Upper lobe of right lung (tissue), 1 donor: ENCODE measurements at regions of chr22 and their contacts with region 1.

Region 1: GRCh38 chr22:37686002-37686982 is at the start of gene NOL12:
- DNase-seq: peak; percentile 89
- ATAC-seq: peak; percentile 94
- H3K4me3 ChIP-seq: peak within 1 kb of the TSS; percentile 86
- H3K27ac ChIP-seq: peak within 1 kb of the TSS; percentile 93
- H3K4me1 ChIP-seq: peaks cover 14% of the 10 kb centered on the region
- H3K27me3 ChIP-seq: no peaks in the 10 kb centered on the region
- CTCF ChIP-seq: no peak
- total RNA-seq, gene NOL12: 21.6 TPM

Region 2: GRCh38 chr22:37633625-37634416 is 52.5 kb before region 1 on chr22:
- intact Hi-C with region 1: loop called (anchors 10 kb)
- DNase-seq: peak; percentile 90
- ATAC-seq: peak; percentile 83
- H3K4me3 ChIP-seq: peak overlapping the region; percentile 8
- H3K27ac ChIP-seq: peak overlapping the region; percentile 89
- H3K4me1 ChIP-seq: peaks cover 52% of the 10 kb centered on the region
- H3K27me3 ChIP-seq: no peaks in the 10 kb centered on the region
- CTCF ChIP-seq: peak; percentile 36

Region 3: DNA sequence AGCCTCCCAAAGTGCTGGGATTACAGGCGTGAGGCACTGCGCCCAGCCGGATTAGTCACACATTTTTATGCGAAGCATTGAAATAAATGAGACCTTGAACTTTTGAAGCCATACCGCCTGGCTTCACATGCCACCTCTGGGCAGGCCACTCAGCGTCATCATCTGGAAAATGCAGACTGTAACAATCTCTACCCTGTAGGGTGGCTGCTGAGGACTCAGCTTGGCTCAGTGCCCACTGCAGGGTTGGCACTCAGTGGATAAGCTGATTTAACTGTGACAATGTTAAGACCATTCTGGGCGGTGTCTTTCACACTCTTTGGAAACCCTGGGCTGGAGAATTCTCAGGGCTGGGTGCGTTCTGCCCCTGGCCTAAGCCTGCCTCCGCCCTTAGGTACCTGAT is 38.4 kb before region 1 on chr22:
- intact Hi-C with region 1: no loop called
- DNase-seq: no peak
- ATAC-seq: no peak
- H3K4me3 ChIP-seq: no peak overlapping the region
- H3K27ac ChIP-seq: no peak overlapping the region
- H3K4me1 ChIP-seq: no peaks in the 10 kb centered on the region
- H3K27me3 ChIP-seq: no peaks in the 10 kb centered on the region
- CTCF ChIP-seq: no peak

Region 4: DNA sequence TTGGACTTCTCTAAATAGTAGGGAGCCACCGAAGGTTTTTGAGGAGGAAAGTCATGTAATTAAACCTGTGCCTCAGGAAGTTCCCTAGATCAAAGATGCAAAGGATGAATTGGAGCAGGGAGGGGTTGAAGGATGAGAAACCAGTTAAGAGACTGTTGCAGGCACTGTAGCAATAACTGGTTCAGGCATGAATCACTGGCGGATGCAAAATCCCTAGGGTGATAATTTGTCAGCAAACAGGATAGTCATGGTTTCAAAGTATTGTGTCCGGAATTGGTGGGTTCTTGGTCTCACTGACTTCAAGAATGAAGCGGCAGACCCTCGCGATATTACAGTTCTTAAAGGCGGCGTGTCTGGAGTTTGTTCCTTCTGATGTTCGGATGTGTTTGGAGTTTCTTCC is 30.4 kb after region 1 on chr22:
- intact Hi-C with region 1: no loop called
- DNase-seq: no peak
- ATAC-seq: no peak
- H3K4me3 ChIP-seq: no peak overlapping the region
- H3K27ac ChIP-seq: no peak overlapping the region
- H3K4me1 ChIP-seq: no peaks in the 10 kb centered on the region
- H3K27me3 ChIP-seq: no peaks in the 10 kb centered on the region
- CTCF ChIP-seq: no peak